Adrenal gland (tissue), 19 donors: ENCODE measurements at regions of chr9 and their contacts with region 1.

Region 1: DNA sequence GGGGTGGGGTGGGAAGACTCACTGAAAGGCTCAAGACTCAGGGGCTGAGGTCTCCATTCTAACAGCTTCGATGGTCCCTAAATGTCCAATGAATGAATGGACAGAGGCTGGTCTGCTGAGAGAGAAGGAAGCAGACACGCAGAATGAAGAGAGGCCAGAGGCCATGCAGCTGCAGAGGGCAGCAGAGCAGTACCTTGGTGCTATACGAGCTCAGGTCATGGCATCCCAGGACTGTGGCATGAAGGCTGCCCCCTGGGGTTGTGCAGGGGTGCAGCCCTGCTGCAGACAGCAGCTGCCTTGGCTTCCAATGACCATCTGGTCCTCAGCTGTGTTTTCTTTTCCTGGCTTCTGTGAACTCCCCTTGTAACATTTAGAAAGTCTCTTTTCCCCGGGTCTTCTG is 15.2 kb upstream of the CORO2A start:
- DNase-seq: no peak
- H3K4me3 ChIP-seq: no peak overlapping the region
- H3K27ac ChIP-seq: no peak overlapping the region
- H3K4me1 ChIP-seq: no peaks in the 10 kb centered on the region
- H3K27me3 ChIP-seq: no peaks in the 10 kb centered on the region
- CTCF ChIP-seq: no peak
- POLR2A ChIP-seq: no peak

Region 2: DNA sequence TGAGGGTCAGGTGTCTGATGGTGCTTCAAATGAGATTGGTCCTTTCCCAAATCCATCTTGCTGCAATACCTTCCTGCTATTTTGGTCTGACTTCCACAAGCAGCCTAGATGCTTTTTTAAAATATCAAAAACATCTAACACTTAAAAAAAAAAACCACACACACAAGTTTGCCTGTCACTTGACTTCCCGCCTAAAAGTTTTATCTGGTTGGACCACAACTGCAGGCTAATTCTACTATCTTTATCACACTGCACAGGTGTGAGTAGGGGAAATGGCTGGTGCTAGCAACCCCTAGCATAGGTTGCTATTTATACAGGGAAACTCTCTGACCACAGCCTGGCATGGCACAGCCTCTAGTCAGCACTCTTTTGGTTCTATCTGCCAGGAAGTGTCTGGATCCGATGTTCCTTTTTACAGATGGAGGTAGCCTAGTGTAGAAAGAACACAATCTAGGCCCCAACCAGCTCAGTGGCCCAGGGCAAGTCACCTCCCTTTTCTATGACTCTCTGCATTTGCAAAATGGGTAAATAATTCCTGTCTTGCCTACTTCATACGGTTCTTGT is 269.4 kb before region 1 on chr9 and contains the start of gene HEMGN:
- intact Hi-C with region 1: loop called in 1 of 2 experiments (anchors 10 kb)
- DNase-seq: no peak
- H3K4me3 ChIP-seq: no peak within 1 kb of the TSS
- H3K27ac ChIP-seq: no peak within 1 kb of the TSS
- H3K4me1 ChIP-seq: no peaks in the 10 kb centered on the region
- H3K27me3 ChIP-seq: peaks cover 11% of the 10 kb centered on the region
- CTCF ChIP-seq: no peak
- POLR2A ChIP-seq: no peak
- total RNA-seq, gene HEMGN: 0.22 to 10.0 (median 0.23) TPM in 3 of 9 donors, not detected in the others

Region 3: DNA sequence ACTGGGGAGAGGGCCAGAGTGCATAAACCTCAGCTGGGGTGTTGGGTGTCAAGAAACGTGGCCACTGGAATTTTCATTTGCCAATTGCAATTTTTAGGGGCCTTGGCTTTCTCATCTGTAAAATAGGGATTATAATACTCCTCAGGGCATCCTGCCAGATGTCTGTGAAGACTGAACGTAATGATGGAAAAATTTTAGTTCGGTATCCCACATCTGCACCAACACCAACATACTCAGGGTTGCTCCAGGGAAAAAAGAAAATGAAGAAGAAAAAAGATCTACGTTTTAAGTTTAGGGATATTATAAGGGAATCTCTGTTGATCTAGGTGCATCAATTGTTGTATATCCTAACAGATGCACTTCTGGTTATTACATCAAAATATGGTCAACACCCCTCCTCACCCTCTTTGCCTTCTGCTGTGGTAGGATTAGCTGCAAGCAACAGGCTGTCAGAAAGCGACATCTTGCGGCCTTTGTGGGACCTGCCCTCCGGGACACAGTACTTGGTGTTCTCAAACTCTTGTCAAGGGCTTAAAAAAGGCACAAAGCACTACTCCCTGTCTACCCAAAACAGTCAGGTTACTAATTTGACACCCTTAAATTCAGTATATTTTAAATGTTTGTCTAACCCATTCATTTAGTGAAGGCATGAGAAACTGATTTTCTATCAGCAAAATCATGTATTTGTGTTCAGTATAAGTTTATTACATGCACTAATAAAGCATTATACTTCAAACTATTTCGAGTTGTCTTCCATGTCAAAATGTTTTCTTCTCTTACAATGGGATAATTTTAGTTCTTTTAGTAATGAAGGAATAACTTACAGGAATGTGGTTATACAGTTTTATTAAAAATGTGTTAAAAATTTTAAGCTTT is 56.1 kb after region 1 on chr9:
- intact Hi-C with region 1: loop called (anchors 2 to 5 kb)
- DNase-seq: peak; percentile 76 to 94 (median 83)
- H3K4me3 ChIP-seq: no peak overlapping the region
- H3K27ac ChIP-seq: no peak overlapping the region
- H3K4me1 ChIP-seq: no peaks in the 10 kb centered on the region
- H3K27me3 ChIP-seq: no peaks in the 10 kb centered on the region
- CTCF ChIP-seq: peak; percentile 80 to 94 (median 93)
- POLR2A ChIP-seq: no peak